Activated CD8-positive, alpha-beta T cell treated with anti-CD3 and anti-CD28 coated beads, Interleukin-2, amount 10 ng/mL, durations not matched to agents 7 days and 5 days (primary cell): ENCODE measurements at regions of chr2 and their contacts with region 1.

Region 1: DNA sequence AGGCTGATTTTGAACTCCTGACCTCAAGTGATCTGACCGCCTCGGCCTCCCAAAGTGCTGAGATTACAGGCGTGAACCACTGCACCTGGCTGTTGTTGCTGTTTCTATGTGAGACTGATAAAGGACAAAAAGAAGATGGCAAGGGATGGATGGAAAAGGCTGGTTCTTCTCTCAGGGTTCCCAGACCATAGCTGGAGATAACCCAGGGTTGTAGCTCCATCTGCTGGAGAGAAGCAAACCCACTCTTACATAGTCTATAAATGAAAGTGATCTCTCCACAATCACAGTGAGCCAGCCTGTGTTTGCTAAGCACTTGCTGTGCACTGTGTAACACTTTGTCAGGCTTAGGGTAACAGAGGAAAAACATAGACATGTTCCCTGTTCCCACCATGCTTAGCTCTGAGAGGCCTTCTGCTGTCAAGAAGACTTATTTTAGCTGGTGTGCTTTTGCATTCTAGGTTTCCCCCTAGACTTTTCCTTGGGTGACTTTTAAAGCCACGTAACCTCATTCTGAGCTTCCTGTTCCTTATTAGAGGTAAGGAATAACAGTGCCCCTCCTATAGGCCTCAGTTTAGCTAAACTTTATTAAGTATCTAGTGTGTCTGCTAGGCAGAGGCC is 49.7 kb downstream of the LIMS1 start:
- DNase-seq: peak; percentile 74
- ATAC-seq: peak; percentile 93
- H3K4me3 Mint-ChIP-seq: no peak overlapping the region
- H3K27ac Mint-ChIP-seq: no peak overlapping the region
- H3K4me1 Mint-ChIP-seq: peaks cover 20% of the 10 kb centered on the region
- H3K27me3 Mint-ChIP-seq: no peaks in the 10 kb centered on the region

Region 2: GRCh38 chr2:108220942-108221541 is 363.0 kb before region 1 on chr2:
- CTCF ChIA-PET with region 1: no interaction called
- POLR2A ChIA-PET with region 1: no interaction called
- DNase-seq: no peak
- ATAC-seq: no peak
- H3K4me3 Mint-ChIP-seq: no peak overlapping the region
- H3K27ac Mint-ChIP-seq: no peak overlapping the region
- H3K4me1 Mint-ChIP-seq: no peaks in the 10 kb centered on the region
- H3K27me3 Mint-ChIP-seq: no peaks in the 10 kb centered on the region

Region 3: DNA sequence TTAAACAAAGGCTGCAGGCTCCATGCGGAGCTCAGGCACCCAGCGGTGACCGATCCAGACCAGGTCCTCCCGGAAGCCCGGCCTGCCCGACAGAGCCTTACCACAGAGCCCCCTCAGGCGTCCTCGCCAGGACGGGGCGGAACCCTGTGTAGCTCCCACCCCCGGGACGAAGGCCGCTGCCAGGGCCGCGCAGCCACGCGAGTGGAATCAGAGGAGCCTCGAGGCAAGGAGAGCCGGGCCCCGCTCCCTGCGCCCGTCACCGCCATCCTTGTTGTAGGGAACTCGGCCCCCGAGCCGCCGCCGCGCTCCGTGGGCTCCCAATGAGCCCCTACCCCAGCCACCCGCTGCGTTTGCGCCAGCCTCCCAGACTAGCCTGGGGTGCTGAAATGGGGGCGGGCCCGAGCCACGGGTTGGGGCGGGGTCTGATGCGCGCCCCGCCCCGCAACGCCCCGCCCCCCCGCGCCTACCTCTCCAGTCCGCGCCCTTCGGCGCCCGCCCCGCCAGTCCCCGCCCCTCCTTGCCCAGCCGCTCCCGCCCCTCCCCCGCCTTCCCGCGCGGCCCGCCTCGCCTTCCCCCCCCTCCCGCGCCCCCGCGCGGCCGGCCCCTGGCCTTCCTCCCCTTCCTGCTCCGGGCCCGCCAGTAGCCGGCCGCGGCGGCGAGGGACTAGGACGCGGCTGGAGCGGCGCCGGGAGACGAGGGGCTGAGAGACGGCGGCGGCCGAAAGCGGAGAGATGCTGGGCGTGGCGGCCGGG is 50.0 kb before region 1 on chr2 and contains the start of gene LIMS1:
- CTCF ChIA-PET with region 1: interaction called, 12 read pairs
- POLR2A ChIA-PET with region 1: no interaction called
- DNase-seq: peak; percentile 91
- ATAC-seq: peak; percentile 90
- H3K4me3 Mint-ChIP-seq: peak within 1 kb of the TSS; percentile 94
- H3K27ac Mint-ChIP-seq: peak within 1 kb of the TSS; percentile 97
- H3K4me1 Mint-ChIP-seq: peaks cover 39% of the 10 kb centered on the region
- H3K27me3 Mint-ChIP-seq: no peaks in the 10 kb centered on the region
- total RNA-seq, gene LIMS1: 36.4 to 41.1 TPM

Region 4: GRCh38 chr2:108691447-108691846 is 107.4 kb after region 1 on chr2:
- CTCF ChIA-PET with region 1: no interaction called
- POLR2A ChIA-PET with region 1: no interaction called
- DNase-seq: no peak
- ATAC-seq: no peak
- H3K4me3 Mint-ChIP-seq: no peak overlapping the region
- H3K27ac Mint-ChIP-seq: no peak overlapping the region
- H3K4me1 Mint-ChIP-seq: no peaks in the 10 kb centered on the region
- H3K27me3 Mint-ChIP-seq: no peaks in the 10 kb centered on the region